ENCODE measurements at regions of chr1 and their contacts with region 1.

Region 1: DNA sequence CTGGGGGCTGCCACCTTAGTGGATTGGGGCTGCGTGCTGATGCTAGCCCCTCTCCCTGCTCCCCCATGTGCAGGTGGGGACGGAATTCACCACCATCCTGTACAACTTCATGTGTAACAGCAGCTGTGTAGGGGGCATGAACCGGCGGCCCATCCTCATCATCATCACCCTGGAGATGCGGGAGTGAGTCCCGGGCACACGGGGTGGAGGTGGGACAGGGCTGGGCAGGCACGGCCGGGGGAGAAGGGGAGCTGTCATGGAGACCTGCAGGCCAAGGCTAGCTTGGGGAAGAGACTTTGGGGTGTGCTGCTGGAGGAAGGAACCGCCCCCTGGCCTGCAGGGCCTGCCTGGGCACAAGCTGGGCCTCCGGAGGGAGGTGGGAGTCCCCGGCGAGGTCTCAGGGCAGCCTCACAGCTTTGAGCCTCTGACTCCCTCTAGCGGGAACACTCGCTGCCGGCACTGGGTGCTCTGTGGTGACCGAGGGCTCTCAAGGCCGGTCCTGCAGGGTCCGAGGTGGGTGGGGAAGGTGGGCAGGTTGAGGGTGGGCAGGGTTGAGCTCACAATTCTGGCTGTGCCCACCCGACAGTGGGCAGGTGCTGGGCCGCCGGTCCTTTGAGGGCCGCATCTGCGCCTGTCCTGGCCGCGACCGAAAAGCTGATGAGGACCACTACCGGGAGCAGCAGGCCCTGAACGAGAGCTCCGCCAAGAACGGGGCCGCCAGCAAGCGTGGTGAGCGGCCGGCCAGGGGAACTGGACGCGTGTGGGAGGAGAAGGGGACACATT is 25.0 kb upstream of the CCDC27 start:
- DNase-seq: no peak
- ATAC-seq: no peak
- H3K4me3 ChIP-seq: no peak overlapping the region
- H3K27ac ChIP-seq: no peak overlapping the region
- H3K4me1 ChIP-seq: peaks cover 5% of the 10 kb centered on the region
- H3K27me3 ChIP-seq: peaks cover 0 to 22% (median 7%) of the 10 kb centered on the region in 3 donors
- CTCF ChIP-seq: no peak

Region 2: DNA sequence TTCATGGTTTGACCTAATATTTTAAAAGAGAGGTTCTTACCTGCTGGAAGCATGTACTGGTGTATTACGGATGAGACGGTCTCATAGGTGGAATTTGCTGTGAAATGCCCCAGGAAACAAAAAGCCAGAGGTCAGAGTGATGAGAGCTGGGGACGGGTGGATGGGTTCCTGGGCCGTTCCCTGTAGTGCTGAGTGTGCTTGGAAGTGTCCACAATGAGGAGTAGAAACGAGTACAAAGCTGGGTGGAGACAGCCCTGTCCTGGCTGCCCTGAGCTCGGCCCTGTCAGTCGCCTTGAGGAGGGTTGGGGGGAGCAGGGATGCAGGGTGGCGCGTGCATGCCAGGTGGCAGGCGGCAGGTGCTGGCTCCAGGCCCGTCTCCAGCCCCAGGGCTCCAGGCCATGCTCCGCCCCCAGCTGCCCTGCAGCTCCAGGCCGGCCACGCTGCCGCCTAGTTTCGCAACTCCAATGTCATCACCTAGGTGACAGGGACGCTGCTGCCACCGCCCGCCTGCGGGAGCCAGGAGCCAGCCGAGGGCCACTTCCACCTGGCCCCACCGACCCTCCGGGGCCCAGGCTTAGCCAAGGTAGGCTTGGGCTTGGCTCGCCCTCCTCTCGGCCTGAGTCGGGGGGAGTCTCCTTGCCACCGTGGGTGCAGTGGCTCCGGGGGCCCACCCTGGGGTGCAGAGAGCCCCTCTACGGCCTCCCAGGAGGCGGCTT is 58.5 kb before region 1 on chr1:
- intact Hi-C with region 1: no loop called
- DNase-seq: peak; percentile 80 to 93
- ATAC-seq: peak; percentile 93 to 98 (median 96)
- H3K4me3 ChIP-seq: peak overlapping the region; percentile 7
- H3K27ac ChIP-seq: no peak overlapping the region
- H3K4me1 ChIP-seq: peaks cover 9% of the 10 kb centered on the region
- H3K27me3 ChIP-seq: peaks cover 0 to 5% (median 0%) of the 10 kb centered on the region in 3 donors
- CTCF ChIP-seq: no peak

Region 3: DNA sequence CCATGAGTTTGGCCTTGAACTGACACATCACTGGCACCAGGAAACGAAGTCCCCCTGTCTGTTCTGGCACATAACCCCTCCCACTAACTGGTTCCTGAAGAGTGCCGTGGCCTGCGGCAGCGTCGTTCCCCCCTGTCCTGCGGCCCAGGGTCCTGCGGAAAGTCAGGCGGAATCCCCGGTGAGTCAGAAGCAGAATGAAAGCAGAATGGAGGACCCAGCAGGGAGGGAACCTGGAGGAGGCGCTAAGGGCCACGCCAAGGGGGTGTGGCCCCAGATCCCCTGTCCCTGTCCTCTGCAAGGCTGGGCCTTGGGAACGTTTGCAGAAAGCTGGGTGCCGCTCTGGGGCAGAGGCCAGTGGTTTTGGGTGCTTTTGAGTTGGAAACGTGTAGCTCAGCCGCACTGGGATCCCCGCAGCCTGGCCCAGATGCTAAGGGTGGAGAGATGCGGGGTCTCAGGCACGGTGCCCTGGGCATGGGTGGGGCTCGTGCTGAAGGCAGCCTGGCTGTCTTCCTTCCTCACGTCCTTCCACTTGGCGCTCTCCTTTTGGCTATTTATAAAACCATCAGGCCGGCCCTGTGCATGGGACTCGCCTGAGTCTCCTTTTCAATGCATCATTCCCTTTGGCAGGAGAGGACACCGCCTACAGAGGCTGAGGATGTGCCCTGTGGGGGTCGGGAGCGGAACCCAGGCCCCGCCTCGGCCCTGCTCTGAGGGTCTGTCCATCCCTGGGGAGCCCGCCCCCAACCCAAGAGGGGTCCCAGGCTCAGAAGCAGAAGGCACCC is 38.7 kb before region 1 on chr1:
- intact Hi-C with region 1: loop called in 1 of 2 experiments (anchors 5 kb)
- DNase-seq: no peak
- ATAC-seq: no peak
- H3K4me3 ChIP-seq: no peak overlapping the region
- H3K27ac ChIP-seq: no peak overlapping the region
- H3K4me1 ChIP-seq: no peaks in the 10 kb centered on the region
- H3K27me3 ChIP-seq: no peaks in the 10 kb centered on the region
- CTCF ChIP-seq: no peak

Region 4: GRCh38 chr1:3695326-3696217 is 31.7 kb before region 1 on chr1:
- intact Hi-C with region 1: loop called (anchors 1 to 2 kb)
- DNase-seq: peak in 1 of 2 donors; percentile 75
- ATAC-seq: peak; percentile 86 to 96 (median 92)
- H3K4me3 ChIP-seq: no peak overlapping the region
- H3K27ac ChIP-seq: no peak overlapping the region
- H3K4me1 ChIP-seq: no peaks in the 10 kb centered on the region
- H3K27me3 ChIP-seq: peaks cover 0 to 2% (median 0%) of the 10 kb centered on the region in 3 donors
- CTCF ChIP-seq: peak; percentile 75